A549 (cell line): ENCODE measurements at regions of chr3 and their contacts with region 1.

Region 1: GRCh38 chr3:123642182-123642956 is 57.5 kb upstream of the HACD2 start:
- DNase-seq: peak; percentile 79 to 92
- ATAC-seq: peak; percentile 93 to 99
- H3K4me3 ChIP-seq: no peak overlapping the region
- H3K27ac ChIP-seq: no peak overlapping the region
- H3K4me1 ChIP-seq: no peaks in the 10 kb centered on the region
- CTCF ChIP-seq: peak; percentile 85
- EP300 ChIP-seq: no peak
- POLR2A ChIP-seq: no peak
- RAD21 ChIP-seq: peak; percentile 68 to 75

Region 2: GRCh38 chr3:123623346-123623880 is 19.0 kb before region 1 on chr3:
- CTCF ChIA-PET with region 1: interaction called, 20 read pairs
- POLR2A ChIA-PET with region 1: no interaction called
- DNase-seq: no peak
- ATAC-seq: no peak
- H3K4me3 ChIP-seq: no peak overlapping the region
- H3K27ac ChIP-seq: no peak overlapping the region
- H3K4me1 ChIP-seq: peaks cover 14% of the 10 kb centered on the region
- CTCF ChIP-seq: no peak
- EP300 ChIP-seq: no peak
- POLR2A ChIP-seq: no peak
- RAD21 ChIP-seq: no peak

Region 3: GRCh38 chr3:123632161-123632655 is 10.2 kb before region 1 on chr3:
- CTCF ChIA-PET with region 1: interaction called, 20 read pairs
- POLR2A ChIA-PET with region 1: interaction called, 7 read pairs
- DNase-seq: peak in 1 of 2 experiments; percentile 30
- ATAC-seq: peak in 1 of 2 experiments; percentile 68; a peak in 3 of 6 replicates
- H3K4me3 ChIP-seq: no peak overlapping the region
- H3K27ac ChIP-seq: peak overlapping the region in 1 of 2 experiments; percentile 64; a peak in 2 of 6 replicates
- H3K4me1 ChIP-seq: peaks cover 13% of the 10 kb centered on the region
- CTCF ChIP-seq: no peak
- EP300 ChIP-seq: no peak
- POLR2A ChIP-seq: no peak
- RAD21 ChIP-seq: no peak

Region 4: GRCh38 chr3:123688241-123688747 is 45.9 kb after region 1 on chr3:
- CTCF ChIA-PET with region 1: interaction called, 829 read pairs
- POLR2A ChIA-PET with region 1: no interaction called
- DNase-seq: peak; percentile 59 to 68
- ATAC-seq: peak; percentile 79 to 82
- H3K4me3 ChIP-seq: no peak overlapping the region
- H3K27ac ChIP-seq: peak overlapping the region; percentile 55 to 82
- H3K4me1 ChIP-seq: peaks cover 24% of the 10 kb centered on the region
- CTCF ChIP-seq: no peak
- EP300 ChIP-seq: peak in 1 of 2 experiments; percentile 25; a peak in 1 of 5 replicates
- POLR2A ChIP-seq: no peak
- RAD21 ChIP-seq: no peak

Region 5: DNA sequence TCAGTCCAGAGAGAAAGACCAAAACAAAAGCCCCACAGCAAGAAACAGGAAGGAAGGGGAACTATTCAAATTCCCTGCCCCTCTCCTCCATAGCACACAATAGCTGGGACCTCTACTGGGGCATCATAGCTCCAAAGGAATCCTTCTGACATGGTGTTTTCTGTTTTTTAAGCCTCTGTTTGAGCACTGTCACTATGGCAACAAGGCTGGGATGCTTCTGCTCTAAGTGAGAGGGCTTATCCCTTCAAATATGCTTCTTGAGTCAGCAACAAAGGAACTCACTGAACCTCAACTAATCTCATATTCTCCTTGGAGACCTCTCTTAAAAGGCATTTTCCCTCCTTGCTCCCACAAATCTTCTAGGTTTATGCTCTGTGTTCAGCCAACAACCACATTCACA is 201.3 kb after region 1 on chr3:
- CTCF ChIA-PET with region 1: no interaction called
- POLR2A ChIA-PET with region 1: no interaction called
- DNase-seq: no peak
- ATAC-seq: no peak
- H3K4me3 ChIP-seq: no peak overlapping the region
- H3K27ac ChIP-seq: no peak overlapping the region
- H3K4me1 ChIP-seq: no peaks in the 10 kb centered on the region
- CTCF ChIP-seq: no peak
- EP300 ChIP-seq: no peak
- POLR2A ChIP-seq: no peak
- RAD21 ChIP-seq: no peak